Transverse colon (tissue), 4 donors: ENCODE measurements at regions of chr7 and their contacts with region 1.

Region 1: DNA sequence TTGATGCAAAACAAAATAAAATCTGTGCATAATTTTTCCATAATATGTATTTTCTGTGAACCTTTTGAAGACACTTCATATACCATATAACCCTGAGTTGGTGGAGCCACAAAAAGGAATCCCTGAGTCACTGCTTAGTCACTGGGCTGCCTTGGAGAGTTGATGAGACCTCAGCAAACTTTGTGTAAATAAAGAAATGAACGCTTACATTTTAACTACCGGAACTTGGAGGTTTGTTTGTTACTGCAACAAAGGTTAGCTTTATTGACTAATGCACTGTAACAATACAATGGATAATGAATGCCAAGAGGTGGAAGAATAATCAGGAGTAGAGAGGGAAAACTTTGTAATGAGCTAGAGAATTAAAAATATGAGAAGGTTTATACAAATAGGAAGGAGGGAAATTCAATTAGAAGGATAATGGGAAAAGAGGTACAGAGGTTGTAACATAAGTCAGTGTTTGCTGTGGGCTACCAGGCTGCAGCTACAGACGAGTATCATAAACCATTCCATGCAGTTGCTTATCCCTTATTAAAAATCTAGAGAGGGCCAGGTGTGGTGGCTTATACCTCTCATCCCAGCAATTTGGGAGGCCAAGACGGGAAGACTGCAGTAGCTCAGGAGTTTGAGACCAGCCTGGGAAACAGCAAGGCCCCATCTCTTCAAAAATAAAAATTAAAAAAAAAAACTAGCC is 1042.1 kb downstream of the TYW1 start:
- DNase-seq: no peak
- H3K4me3 ChIP-seq: no peak overlapping the region
- H3K27ac ChIP-seq: no peak overlapping the region
- H3K4me1 ChIP-seq: no peaks in the 10 kb centered on the region
- H3K27me3 ChIP-seq: no peaks in the 10 kb centered on the region
- CTCF ChIP-seq: no peak
- EP300 ChIP-seq: no peak
- POLR2A ChIP-seq: no peak

Region 2: GRCh38 chr7:67947651-67948050 is 91.1 kb before region 1 on chr7:
- in situ Hi-C with region 1: loop called in 1 of 4 experiments (anchors 25 kb)
- intact Hi-C with region 1: no loop called
- DNase-seq: no peak
- H3K4me3 ChIP-seq: no peak overlapping the region
- H3K27ac ChIP-seq: no peak overlapping the region
- H3K4me1 ChIP-seq: no peaks in the 10 kb centered on the region
- H3K27me3 ChIP-seq: no peaks in the 10 kb centered on the region
- CTCF ChIP-seq: no peak
- EP300 ChIP-seq: no peak
- POLR2A ChIP-seq: no peak

Region 3: DNA sequence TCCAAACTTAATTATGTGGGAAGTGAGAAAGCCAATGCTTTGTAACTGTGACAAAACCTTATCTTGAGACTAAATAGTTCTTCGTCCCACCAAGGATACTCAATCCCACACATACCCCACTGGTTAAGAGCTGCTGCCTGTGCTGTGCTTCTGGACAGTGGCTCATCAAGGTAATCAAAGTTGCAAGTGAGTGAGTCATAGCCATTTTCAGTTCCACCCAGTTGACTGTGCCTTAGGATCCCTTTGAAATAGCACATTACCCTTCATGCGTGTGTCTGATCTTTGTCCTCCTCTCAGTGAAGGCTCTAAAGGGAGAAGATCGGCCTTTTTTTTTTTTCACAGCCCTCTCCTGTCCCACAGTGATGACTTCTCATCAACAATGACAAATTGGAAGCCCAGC is 853.5 kb after region 1 on chr7:
- in situ Hi-C with region 1: no loop called
- intact Hi-C with region 1: no loop called
- DNase-seq: no peak
- H3K4me3 ChIP-seq: no peak overlapping the region
- H3K27ac ChIP-seq: no peak overlapping the region
- H3K4me1 ChIP-seq: no peaks in the 10 kb centered on the region
- H3K27me3 ChIP-seq: no peaks in the 10 kb centered on the region
- CTCF ChIP-seq: no peak
- EP300 ChIP-seq: no peak
- POLR2A ChIP-seq: no peak